T-cell (primary cell): ENCODE measurements at regions of chr17 and their contacts with region 1.

Region 1: DNA sequence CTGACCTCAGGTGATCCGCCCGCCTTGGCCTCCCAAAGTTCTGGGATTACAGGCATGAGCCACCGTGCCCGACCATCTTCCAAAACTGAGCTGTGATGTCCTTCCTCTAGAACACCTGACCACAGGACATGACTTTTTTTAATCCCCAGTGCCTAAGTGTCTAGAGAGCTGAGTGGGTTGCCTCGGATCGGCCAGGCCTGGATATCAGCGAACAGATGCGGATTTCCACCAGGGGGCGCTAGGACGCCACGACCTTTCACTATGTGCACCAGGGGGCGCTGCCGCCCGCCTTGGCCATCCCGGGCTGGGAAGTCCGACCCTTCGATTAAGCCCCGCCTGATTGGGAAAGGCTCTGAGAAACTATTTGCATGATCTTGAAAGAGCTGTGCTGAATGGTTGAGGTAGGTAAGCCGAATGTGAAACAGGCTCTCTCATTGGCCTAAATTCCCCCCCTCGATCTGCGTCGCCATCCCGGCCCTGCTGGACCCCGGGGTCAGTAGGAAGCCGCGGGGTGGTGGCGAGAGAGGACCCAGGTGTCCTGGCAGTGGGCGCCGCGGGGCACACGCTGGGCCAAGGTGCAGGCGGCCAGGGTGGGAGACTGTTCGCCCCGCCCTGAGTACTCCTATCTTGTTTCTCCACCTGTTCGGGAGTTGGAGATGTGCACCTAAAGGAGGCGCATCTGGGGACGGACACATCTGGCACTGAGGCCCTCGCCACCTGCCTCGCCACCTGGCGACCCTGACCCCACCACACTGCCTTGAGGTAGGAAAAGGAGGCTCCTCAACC is at the start of gene ACBD4:
- DNase-seq: peak; percentile 92 to 99 (median 96)
- ATAC-seq: peak; percentile 84 to 86 (median 85)
- H3K4me3 ChIP-seq: peak within 1 kb of the TSS; percentile 64 to 80
- H3K4me3 Mint-ChIP-seq: peak within 1 kb of the TSS; percentile 84 to 88 (median 84)
- H3K27ac ChIP-seq: peak within 1 kb of the TSS; percentile 40
- H3K27ac Mint-ChIP-seq: peak within 1 kb of the TSS; percentile 78 to 86
- H3K4me1 ChIP-seq: peaks cover 0 to 33% of the 10 kb centered on the region in 2 experiments
- H3K4me1 Mint-ChIP-seq: peaks cover 17 to 23% (median 22%) of the 10 kb centered on the region in 3 donors
- H3K27me3 ChIP-seq: peaks cover 0 to 15% of the 10 kb centered on the region in 2 experiments
- H3K27me3 Mint-ChIP-seq: no peaks in the 10 kb centered on the region
- total RNA-seq, gene ACBD4: 28.4 to 48.5 (median 38.9) TPM

Region 2: GRCh38 chr17:45060797-45061605 is 74.4 kb before region 1 on chr17 and contains the start of gene NMT1:
- CTCF ChIA-PET with region 1: interaction called in 1 of 2 experiments, 12 read pairs
- POLR2A ChIA-PET with region 1: no interaction called
- DNase-seq: peak; percentile 86 to 98 (median 93)
- ATAC-seq: peak; percentile 88 to 94 (median 92)
- H3K4me3 ChIP-seq: peak within 1 kb of the TSS; percentile 93 to 98
- H3K4me3 Mint-ChIP-seq: peak within 1 kb of the TSS; percentile 85 to 100 (median 97)
- H3K27ac ChIP-seq: peak within 1 kb of the TSS; percentile 81
- H3K27ac Mint-ChIP-seq: peak within 1 kb of the TSS; percentile 100
- H3K4me1 ChIP-seq: peaks cover 14 to 41% of the 10 kb centered on the region in 2 experiments
- H3K4me1 Mint-ChIP-seq: peaks cover 33 to 62% (median 57%) of the 10 kb centered on the region in 3 donors
- H3K27me3 ChIP-seq: peaks cover 0 to 3% of the 10 kb centered on the region in 2 experiments
- H3K27me3 Mint-ChIP-seq: no peaks in the 10 kb centered on the region
- total RNA-seq, gene NMT1: 79.5 to 139 (median 125) TPM

Region 3: GRCh38 chr17:45155029-45155428 is 19.6 kb after region 1 on chr17:
- CTCF ChIA-PET with region 1: interaction called, 33 to 277 read pairs
- POLR2A ChIA-PET with region 1: interaction called, 4 to 18 read pairs
- DNase-seq: no peak
- ATAC-seq: no peak
- H3K4me3 ChIP-seq: no peak overlapping the region
- H3K4me3 Mint-ChIP-seq: no peak overlapping the region
- H3K27ac ChIP-seq: no peak overlapping the region
- H3K27ac Mint-ChIP-seq: peak overlapping the region in 1 of 2 donors; percentile 58
- H3K4me1 ChIP-seq: peaks cover 24 to 55% of the 10 kb centered on the region in 2 experiments
- H3K4me1 Mint-ChIP-seq: peaks cover 52 to 55% (median 53%) of the 10 kb centered on the region in 3 donors
- H3K27me3 ChIP-seq: no peaks in the 10 kb centered on the region
- H3K27me3 Mint-ChIP-seq: no peaks in the 10 kb centered on the region

Region 4: DNA sequence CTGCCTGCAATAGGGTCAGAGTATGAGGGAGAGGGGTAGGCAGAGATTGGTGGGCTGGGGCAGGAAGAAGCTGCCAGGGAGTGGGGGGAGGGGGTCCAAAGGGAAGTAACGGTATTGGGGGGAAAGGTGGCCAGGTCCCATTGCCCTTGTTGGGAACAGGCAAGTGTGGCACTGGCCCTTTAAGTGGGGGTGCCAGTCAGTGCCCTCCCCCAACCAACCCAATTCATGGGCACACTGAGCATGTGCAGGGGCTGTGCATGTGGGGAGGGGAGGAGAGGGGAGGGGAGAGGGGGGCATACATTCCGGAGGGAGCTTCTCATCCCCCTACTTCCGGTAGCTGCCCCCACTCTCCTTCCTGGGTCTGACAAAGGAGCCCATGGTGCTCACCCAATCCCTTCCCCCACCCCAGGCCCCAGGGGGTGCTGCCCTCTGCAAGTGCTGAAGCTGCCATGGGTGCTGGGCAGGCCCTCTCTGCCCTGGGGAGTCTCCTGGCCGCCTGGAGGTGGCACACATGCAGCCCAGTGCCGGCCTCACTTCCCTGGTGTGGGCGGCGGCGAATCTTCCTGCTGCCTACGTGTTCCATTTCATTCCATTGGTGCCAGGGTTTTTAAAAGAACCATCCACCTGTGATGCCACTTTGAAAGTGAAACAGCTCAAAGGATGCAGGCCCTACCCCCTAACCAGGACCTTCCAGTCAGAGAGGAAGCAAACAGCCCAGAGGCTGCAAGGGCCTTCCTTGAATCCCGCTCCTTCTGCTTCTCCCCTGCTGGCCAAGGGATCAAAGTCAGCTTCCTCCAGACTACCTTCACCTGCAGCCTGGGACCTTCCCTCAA is 37.3 kb after region 1 on chr17:
- CTCF ChIA-PET with region 1: interaction called, 5 to 20 read pairs
- POLR2A ChIA-PET with region 1: interaction called in 1 of 2 experiments, 15 read pairs
- DNase-seq: peak in 29 of 35 experiments; percentile 14 to 60 (median 33)
- ATAC-seq: peak; percentile 80 to 88 (median 82)
- H3K4me3 ChIP-seq: peak overlapping the region; percentile 39 to 42
- H3K4me3 Mint-ChIP-seq: peak overlapping the region; percentile 69 to 82 (median 74)
- H3K27ac ChIP-seq: peak overlapping the region; percentile 62
- H3K27ac Mint-ChIP-seq: peak overlapping the region; percentile 93 to 98
- H3K4me1 ChIP-seq: peaks cover 12 to 25% of the 10 kb centered on the region in 2 experiments
- H3K4me1 Mint-ChIP-seq: peaks cover 19 to 24% (median 23%) of the 10 kb centered on the region in 3 donors
- H3K27me3 ChIP-seq: no peaks in the 10 kb centered on the region
- H3K27me3 Mint-ChIP-seq: no peaks in the 10 kb centered on the region

Region 5: GRCh38 chr17:45228763-45229539 is 93.6 kb after region 1 on chr17:
- CTCF ChIA-PET with region 1: interaction called, 10 read pairs
- POLR2A ChIA-PET with region 1: interaction called in 1 of 2 experiments, 8 read pairs
- DNase-seq: peak in 34 of 35 experiments; percentile 66 to 92 (median 80)
- ATAC-seq: peak; percentile 33 to 57 (median 36)
- H3K4me3 ChIP-seq: peak overlapping the region; percentile 63 to 96
- H3K4me3 Mint-ChIP-seq: peak overlapping the region; percentile 95 to 100 (median 99)
- H3K27ac ChIP-seq: peak overlapping the region; percentile 100
- H3K27ac Mint-ChIP-seq: peak overlapping the region; percentile 99
- H3K4me1 ChIP-seq: peaks cover 52 to 97% of the 10 kb centered on the region in 2 experiments
- H3K4me1 Mint-ChIP-seq: peaks cover 85 to 92% (median 87%) of the 10 kb centered on the region in 3 donors
- H3K27me3 ChIP-seq: no peaks in the 10 kb centered on the region
- H3K27me3 Mint-ChIP-seq: no peaks in the 10 kb centered on the region